ENCODE measurements at regions of chr12 and their contacts with region 1.

Region 1: DNA sequence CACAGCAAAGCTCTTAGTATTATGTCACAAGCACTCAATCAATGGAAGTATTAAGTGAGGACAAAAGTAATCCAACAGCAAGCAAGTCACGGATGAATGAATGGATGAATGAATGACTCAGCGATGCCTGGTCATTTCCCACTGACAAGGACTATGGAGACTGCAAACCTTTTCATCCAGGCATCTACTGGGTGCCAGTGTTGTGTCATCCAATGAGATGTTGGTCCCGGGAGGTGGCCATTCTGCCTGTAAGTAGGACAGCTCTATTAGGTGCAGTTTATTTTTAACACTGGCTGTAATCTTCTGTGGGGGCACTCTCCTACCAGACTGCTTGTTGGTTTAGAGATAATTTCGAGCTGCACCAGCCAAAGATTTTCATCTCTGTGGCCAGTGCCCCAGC is 39.4 kb downstream of the STAB2 start:
- DNase-seq: peak in 5 of 10 donors; percentile 32 to 96 (median 73)

Region 2: GRCh38 chr12:103586132-103586531 is 40.4 kb before region 1 on chr12:
- intact Hi-C with region 1: no loop called
- DNase-seq: no peak

Region 3: DNA sequence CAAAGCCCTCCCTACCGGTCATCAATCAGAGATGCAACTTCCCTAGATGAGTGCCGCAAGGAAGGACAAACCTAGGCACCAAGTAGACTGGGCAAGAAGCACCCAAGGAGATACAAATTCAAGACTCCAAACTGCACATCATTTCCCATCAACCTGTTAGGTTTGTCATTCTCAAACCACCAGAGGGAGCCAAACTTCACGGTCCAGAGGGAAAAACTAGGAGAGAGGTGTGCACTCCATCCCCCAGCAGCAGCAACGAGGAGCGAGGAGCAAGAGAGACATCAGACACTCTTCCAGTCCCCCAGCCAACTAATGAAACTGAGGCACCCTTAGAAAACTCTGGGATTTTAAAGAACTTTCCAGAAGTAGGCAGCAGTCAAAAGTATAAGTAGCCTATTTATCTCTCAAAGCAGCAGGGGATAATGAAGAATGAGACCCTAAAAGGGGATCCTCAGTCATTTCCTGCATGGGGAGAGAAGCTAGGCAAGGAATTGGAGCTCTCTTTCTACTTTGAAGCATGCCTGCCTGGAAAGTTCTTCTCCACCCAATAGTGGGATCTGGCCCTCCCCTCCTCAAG is 251.5 kb after region 1 on chr12:
- intact Hi-C with region 1: loop called (anchors 5 kb)
- DNase-seq: peak in 4 of 10 donors; percentile 15 to 37 (median 23)

Measured in posterior cingulate gyrus (tissue), 11 donors.